GM10248 (cell line): ENCODE measurements at regions of chr20 and their contacts with region 1.

Region 1: DNA sequence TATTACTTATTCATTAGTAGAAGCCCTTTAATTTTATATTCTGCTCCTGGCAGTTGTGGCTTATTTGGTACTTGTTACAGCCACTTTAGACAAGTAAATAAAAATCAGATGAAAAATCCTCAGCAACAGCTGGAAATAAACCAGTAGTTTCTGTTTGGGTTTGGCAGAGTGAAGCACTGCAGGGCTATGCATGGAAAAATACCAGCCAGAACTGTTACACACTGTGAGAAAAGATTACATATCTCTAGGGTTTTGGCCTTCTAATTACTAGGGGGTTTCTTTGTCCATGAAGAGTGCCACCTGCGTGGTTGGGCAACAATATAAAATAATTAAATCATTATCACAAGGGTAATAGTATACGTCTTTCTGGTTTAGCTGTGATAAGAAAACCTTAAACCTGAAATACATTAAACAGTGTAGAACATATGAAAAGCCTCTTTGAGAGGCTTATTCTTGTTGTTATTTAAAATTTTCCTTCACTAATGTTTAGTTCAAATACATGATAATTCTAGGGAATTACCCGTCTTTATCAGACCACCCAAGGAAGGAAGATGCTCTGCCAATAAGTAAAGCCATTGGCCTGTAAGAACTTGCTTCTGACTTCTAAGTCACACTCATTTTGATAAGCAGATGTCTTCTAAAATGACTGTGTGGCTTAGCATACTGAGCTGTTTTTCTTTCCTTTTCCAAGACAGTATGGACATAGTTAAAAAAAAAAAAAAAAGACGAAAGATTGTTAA is 320.0 kb upstream of the FLRT3 start:
- DNase-seq: no peak
- CTCF ChIP-seq: no peak

Region 2: DNA sequence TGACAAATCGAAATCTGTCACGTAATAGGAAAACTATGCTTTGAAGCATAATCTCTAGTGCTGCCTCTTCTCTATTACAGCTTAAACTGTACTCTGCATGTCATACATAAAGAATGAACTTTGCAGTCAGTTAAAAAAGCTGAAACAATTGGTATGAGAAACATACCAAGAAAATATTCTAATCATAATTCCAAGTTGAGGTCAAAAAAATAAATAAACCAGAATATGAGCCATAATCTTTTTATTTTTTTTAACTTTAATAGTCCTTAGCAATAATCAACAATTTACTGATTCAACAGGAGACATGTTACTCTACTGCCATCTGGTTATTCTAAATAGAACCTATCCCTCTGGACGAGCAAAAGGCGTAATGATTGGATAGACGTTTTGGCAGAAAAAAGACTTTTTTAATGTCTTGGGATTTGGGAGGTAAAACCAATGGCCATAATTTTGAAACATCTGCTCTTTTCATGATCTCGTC is 95.7 kb before region 1 on chr20:
- CTCF ChIA-PET with region 1: no interaction called
- POLR2A ChIA-PET with region 1: no interaction called
- DNase-seq: no peak
- CTCF ChIP-seq: no peak

Region 3: GRCh38 chr20:14622796-14623195 is 34.6 kb before region 1 on chr20:
- CTCF ChIA-PET with region 1: no interaction called
- POLR2A ChIA-PET with region 1: no interaction called
- DNase-seq: no peak
- CTCF ChIP-seq: no peak

Region 4: DNA sequence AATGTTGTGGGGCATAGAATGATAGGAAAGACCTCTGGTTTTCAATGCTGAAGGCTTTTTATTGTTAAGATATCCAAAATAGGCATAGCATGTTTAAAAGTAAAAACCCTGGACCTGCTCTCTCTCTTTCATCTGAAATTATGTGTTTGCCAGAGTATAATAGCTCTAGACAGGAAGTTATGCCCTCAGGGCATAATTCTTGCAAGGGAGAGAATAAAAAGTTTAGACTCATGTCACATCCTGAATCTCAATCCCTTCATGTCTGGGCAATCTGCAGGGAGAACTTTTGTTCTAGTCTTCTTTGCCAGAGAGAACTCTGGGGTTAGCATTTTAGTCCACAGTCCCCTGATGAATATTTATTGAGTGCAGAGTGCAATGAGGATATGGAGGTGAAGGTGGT is 22.8 kb before region 1 on chr20:
- CTCF ChIA-PET with region 1: no interaction called
- POLR2A ChIA-PET with region 1: no interaction called
- DNase-seq: no peak
- CTCF ChIP-seq: no peak

Region 5: GRCh38 chr20:14677455-14677854 is 20.0 kb after region 1 on chr20:
- CTCF ChIA-PET with region 1: interaction called, 10 read pairs
- POLR2A ChIA-PET with region 1: no interaction called
- DNase-seq: no peak
- CTCF ChIP-seq: no peak